Activated T-helper 1 cell treated with anti-CD3 and anti-CD28 coated beads, Interleukin-12 subunit alpha, Interleukin-12 subunit beta, Interleukin-2, Interleukin-4 antibody, amounts not matched to agents 30 ng/mL and 10 ng/mL and 1 ng/mL, durations not matched to agents 14 hours and 24 hours and 36 hours (primary cell): ENCODE measurements at regions of chr2 and their contacts with region 1.

Region 1: DNA sequence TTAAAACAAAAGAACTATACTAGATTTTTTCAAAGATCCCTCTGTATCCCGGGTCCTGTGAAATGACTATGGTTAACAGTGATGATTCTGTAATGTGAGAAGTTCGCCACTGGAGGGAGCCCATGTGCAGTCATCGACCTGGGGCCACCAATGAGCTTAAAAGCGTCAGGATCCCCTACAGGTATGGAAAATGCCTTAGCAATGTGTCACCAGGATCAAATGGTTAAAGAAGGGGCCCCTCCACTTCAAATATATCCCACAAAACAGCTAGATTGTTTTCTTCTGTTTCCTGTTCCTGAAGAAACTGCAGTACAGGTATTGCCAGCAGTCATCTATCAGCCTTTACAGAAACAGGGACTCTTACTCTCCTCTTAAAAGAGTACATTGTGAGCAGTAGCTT is 15.3 kb downstream of the CHRNA1 start:
- DNase-seq: peak; percentile 55
- H3K4me3 Mint-ChIP-seq: no peak overlapping the region
- H3K27ac Mint-ChIP-seq: no peak overlapping the region
- H3K4me1 Mint-ChIP-seq: peaks cover 44% of the 10 kb centered on the region
- H3K27me3 Mint-ChIP-seq: peaks cover 7% of the 10 kb centered on the region

Region 2: DNA sequence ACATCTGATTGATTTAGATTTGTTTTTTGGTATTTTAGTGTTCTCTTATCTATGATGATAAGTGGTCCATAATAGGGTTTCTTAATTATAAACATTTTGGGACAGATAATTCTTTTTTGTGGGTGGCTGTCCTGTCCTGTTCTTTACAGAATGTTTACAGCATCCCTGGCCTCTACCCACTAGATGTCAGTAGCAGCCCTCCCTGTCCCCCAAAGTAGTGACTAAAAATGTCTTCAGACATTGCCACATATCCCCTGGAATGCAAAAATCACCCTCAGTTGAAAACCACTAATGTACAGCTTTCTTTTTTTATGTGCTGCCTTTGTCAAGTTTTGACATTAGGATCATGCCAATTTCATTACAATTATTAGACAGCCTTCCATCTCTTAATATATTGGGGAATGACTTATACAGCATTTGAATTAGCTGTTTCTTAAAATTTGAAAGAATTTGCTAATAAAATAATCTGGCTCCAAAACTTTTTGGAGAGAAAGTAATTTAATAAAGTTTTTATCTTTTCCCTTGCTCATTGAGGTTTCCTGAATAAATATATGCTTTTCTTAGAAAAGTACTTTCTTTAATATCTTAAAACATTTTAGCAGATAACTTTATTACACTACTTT is 170.9 kb before region 1 on chr2:
- intact Hi-C with region 1: loop called (anchors 5 kb)
- DNase-seq: no peak
- H3K4me3 Mint-ChIP-seq: no peak overlapping the region
- H3K27ac Mint-ChIP-seq: no peak overlapping the region
- H3K4me1 Mint-ChIP-seq: peaks cover 60% of the 10 kb centered on the region
- H3K27me3 Mint-ChIP-seq: no peaks in the 10 kb centered on the region

Region 3: GRCh38 chr2:174697255-174697654 is 51.7 kb before region 1 on chr2:
- intact Hi-C with region 1: loop called (anchors 1 kb)
- DNase-seq: peak; percentile 57
- H3K4me3 Mint-ChIP-seq: no peak overlapping the region
- H3K27ac Mint-ChIP-seq: no peak overlapping the region
- H3K4me1 Mint-ChIP-seq: peaks cover 14% of the 10 kb centered on the region
- H3K27me3 Mint-ChIP-seq: peaks cover 14% of the 10 kb centered on the region

Region 4: GRCh38 chr2:174797781-174798276 is 48.9 kb after region 1 on chr2:
- intact Hi-C with region 1: loop called (anchors 1 kb)
- DNase-seq: no peak
- H3K4me3 Mint-ChIP-seq: no peak overlapping the region
- H3K27ac Mint-ChIP-seq: no peak overlapping the region
- H3K4me1 Mint-ChIP-seq: peaks cover 24% of the 10 kb centered on the region
- H3K27me3 Mint-ChIP-seq: peaks cover 5% of the 10 kb centered on the region

Region 5: DNA sequence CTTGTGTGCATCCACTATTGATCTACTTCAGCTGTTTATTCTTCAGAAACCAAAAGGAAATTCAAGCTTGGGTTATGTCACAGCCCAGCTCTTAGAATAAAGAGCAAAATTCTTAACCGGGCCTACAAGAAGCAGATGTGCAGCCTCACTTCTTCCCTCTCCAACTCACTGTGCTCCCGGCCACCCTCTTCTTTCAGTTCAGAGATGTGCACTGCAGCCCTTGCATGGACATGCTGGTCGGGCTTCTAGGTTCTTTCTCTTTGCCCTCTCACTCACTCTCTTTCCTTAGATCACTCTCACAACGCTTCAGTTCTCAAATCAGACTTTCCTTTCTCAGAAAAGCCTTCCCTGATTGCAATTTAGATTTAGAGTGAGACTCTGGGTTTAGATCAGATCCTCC is 152.1 kb after region 1 on chr2:
- intact Hi-C with region 1: loop called (anchors 5 kb)
- DNase-seq: no peak
- H3K4me3 Mint-ChIP-seq: peak overlapping the region; percentile 38
- H3K27ac Mint-ChIP-seq: peak overlapping the region; percentile 49
- H3K4me1 Mint-ChIP-seq: peaks cover 20% of the 10 kb centered on the region
- H3K27me3 Mint-ChIP-seq: no peaks in the 10 kb centered on the region

Region 6: DNA sequence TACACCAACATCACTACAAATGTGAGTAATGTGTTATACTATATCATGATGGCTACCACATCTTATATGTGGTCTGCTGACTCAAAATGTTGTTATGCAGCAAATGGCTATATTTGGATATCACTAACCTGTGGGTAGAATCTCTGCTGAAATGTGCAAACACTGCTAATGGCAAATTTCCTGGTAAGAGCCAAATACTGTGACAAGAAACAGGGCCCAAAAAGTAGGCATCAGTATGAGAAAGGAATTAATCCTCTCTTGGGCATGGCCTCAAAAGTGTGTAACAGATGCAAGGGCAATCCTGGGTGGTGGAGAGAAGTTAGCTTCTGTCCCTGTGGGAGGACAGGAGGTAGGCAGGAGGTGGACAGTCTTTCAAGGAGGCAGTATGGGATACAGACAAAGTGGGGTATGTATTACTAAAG is 405.7 kb after region 1 on chr2:
- intact Hi-C with region 1: loop called (anchors 1 kb)
- DNase-seq: no peak
- H3K4me3 Mint-ChIP-seq: peak overlapping the region; percentile 41
- H3K27ac Mint-ChIP-seq: peak overlapping the region; percentile 92
- H3K4me1 Mint-ChIP-seq: peaks cover 31% of the 10 kb centered on the region
- H3K27me3 Mint-ChIP-seq: no peaks in the 10 kb centered on the region